ENCODE measurements at regions of chr1 and their contacts with region 1.

Region 1: DNA sequence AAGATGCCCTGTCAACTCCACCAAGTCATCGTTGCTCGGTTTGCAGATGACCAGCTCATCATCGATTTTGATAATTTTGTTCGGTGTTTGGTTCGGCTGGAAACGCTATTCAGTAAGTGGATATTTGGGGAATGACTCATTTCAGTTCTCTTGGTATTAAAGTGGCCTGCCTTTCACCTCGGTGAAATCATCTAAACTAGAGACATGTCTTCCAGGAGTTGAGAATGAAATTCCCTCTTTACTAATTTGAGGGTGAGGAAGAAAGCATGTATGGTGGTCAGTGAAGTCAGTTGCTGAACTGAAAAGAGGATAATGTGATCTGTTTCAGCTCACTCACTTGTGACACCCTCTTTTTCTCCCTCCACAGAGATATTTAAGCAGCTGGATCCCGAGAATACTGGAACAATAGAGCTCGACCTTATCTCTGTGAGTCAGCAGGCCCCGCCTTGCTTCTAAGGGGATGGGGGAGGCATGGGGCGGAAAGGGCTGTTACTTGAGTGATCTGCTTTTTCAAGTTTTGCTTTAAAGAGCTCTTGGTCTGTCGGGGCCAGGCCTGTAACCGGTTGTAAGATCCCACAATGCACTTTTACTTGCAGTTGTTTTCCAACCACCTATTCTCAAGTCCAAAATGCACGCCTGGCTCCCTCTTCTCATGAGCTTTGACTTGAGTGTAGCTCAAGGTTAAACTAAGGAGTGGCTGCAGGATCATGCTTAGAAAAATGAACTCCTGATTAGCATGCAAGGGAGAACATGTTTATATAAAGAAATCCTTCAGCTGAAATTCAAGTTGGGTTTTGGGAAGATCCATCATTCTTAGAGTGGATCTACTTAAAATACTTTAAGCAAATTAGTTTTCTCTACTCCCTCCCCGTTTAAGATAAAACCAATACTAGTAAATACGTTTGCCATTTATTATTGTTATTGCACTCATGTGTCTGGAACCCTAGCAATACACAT is 59.8 kb downstream of the CAPN2 start:
- DNase-seq: peak; percentile 80
- H3K4me3 Mint-ChIP-seq: peak overlapping the region; percentile 64
- H3K27ac Mint-ChIP-seq: peak overlapping the region; percentile 78
- H3K4me1 Mint-ChIP-seq: peaks cover 54% of the 10 kb centered on the region
- H3K27me3 Mint-ChIP-seq: no peaks in the 10 kb centered on the region
- CTCF ChIP-seq: no peak

Region 2: DNA sequence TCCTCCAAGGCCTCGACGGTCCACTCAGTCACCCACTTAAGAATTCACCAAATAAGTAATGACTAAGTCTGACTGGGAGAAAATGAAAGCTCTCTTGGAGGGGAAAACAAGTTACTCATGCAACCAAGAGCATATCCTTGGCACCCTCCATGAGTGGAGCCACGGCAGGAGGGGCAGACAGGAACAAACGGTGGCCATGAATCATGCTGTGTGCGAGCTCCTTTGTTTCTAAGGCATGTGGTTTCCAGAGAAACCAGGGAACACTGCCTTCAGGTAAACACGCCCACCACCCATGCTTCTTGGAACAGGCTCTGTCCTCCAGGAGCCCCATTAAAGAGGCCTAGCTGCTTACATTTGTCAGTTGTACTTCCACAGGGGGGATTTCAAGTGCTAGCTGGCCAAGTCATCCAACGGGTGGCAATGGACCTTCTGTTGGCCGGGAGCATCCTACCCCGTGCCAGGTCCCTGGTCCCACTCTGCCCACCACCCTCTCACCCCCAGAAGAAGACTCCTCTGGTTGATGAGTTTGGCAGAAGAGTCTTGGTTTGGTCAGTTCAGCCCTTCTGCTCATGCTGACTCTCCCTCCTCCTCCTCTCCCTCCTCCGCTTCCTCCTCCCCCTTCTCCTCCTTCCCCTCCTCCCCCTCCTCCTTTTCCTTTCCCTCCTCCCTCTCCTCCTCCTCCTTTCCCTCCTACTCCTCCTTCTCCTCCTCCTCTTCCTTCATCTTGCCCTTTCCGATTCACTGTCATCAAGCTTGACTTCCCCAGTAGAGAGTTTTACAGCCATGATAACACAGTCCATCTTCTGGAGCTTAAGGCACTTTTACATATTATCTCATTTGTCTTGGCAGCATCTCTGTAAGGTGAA is 271.3 kb before region 1 on chr1:
- CTCF ChIA-PET with region 1: interaction called, 13 read pairs
- intact Hi-C with region 1: no loop called
- DNase-seq: peak; percentile 63
- H3K4me3 Mint-ChIP-seq: no peak overlapping the region
- H3K27ac Mint-ChIP-seq: no peak overlapping the region
- H3K4me1 Mint-ChIP-seq: no peaks in the 10 kb centered on the region
- H3K27me3 Mint-ChIP-seq: peaks cover 7% of the 10 kb centered on the region
- CTCF ChIP-seq: no peak

Region 3: DNA sequence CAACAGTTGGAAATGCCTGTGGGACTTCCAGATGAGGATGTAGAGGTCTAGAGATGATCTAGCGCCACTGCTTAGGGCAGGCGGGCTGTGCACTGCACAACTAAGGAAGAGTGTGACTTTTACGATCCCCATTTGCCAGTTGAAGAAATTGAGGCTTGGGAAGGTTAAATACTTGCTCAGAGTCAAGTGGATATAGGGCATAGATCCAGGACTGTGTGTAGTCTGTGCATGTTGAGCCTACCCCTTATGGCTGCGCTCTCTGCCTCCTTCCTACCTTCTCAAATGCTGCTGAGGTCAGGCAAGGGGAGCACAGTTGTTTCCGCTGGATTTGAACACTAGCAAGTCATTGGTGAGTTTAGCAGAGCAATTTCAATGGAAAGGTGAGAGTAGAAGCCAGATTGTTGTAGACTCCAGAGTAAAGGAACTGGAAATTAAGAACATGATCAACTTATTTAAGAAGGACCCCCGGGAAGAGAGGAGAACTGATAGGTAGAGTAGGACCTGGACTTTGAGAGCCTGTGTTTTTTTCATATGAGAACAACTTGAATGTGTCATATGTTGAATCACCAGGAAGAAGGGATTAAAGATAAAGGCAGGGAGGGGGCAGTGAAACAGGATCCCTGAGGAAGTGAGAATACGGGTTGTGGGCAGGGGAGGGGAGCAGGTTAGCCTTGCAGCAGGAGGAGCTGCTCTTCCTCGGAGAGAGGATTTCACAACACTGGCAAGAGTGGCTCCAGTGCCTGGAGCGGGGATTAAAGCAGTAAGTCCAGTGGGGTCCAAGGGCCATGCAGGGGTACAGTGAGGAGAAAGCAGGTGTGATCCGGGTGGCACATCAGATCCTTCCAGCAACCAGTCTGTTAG is 57.0 kb before region 1 on chr1:
- CTCF ChIA-PET with region 1: interaction called, 4 read pairs
- intact Hi-C with region 1: loop called (anchors 1 kb)
- DNase-seq: peak; percentile 89
- H3K4me3 Mint-ChIP-seq: peak overlapping the region; percentile 80
- H3K27ac Mint-ChIP-seq: peak overlapping the region; percentile 94
- H3K4me1 Mint-ChIP-seq: peaks cover 73% of the 10 kb centered on the region
- H3K27me3 Mint-ChIP-seq: no peaks in the 10 kb centered on the region
- CTCF ChIP-seq: no peak

Region 4: DNA sequence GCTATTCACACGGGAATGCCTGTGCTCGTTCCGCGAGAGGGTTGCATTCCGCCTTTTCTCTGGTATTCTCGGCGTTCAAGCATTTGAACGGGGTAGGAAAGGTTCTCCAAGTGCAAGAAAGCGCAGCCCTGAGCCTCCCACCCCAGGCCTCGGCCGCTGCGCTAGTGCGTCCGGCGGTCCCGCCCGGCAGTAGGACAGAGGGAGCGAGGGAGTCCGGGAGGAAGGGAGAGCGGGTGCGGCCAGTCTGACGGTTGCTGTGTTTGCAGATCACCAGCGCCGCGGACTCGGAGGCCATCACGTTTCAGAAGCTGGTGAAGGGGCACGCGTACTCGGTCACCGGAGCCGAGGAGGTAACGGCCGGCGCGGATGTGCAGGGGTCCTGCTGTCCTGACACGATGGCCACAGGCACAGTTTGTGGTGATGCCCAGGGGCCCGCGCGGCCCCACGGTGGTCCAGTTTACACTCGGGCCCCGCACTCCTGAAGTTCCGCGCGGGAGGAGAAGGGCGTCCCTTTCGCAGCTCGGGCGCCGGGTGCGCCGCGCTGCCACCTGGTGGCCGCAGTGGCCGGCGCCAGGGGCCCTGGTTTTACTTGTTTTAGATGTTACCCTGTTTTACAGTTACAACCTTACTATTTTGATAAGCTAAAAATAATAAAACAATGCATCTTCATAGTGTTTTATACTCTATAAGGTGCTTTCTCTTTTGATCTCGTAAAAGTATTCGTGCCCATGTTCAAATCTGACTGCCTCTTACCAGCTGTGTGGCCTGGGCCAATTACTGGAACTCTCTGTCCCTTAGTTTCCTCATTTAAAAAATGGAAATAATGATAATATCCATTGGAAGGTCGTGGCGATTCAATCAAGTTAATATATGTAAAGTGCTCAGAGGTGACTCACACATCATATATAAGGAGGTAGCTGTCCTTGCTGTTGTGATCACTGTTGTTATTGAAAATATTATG is 23.0 kb before region 1 on chr1:
- CTCF ChIA-PET with region 1: interaction called, 12 read pairs
- intact Hi-C with region 1: no loop called
- DNase-seq: peak; percentile 44
- H3K4me3 Mint-ChIP-seq: no peak overlapping the region
- H3K27ac Mint-ChIP-seq: peak overlapping the region; percentile 48
- H3K4me1 Mint-ChIP-seq: no peaks in the 10 kb centered on the region
- H3K27me3 Mint-ChIP-seq: no peaks in the 10 kb centered on the region
- CTCF ChIP-seq: peak; percentile 90

Region 5: DNA sequence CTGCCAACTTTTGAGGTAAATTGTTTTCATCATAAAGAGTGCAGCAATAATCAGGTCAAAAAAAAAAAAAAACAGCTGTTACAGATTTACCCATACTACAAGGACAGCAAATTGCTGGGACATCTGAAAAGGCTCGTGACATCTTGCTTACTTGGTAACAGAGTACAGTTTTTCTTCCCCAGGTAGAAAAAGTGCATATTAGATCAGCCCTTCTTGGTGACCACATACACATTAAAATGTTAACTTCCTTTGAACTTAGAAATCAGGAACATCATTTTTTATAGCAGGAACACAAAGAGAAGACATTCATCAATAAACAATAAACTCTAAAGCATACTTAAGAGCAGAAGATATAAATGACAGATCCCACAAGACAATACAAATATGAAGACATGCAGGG is 57.6 kb after region 1 on chr1:
- CTCF ChIA-PET with region 1: no interaction called
- intact Hi-C with region 1: no loop called
- DNase-seq: no peak
- H3K4me3 Mint-ChIP-seq: no peak overlapping the region
- H3K27ac Mint-ChIP-seq: peak overlapping the region; percentile 7
- H3K4me1 Mint-ChIP-seq: peaks cover 37% of the 10 kb centered on the region
- H3K27me3 Mint-ChIP-seq: no peaks in the 10 kb centered on the region
- CTCF ChIP-seq: no peak